GM12878 (cell line): ENCODE measurements at regions of chr2 and their contacts with region 1.

Region 1: GRCh38 chr2:85707304-85707703 is 13.1 kb downstream of the GNLY start:
- DNase-seq: peak; percentile 75
- ATAC-seq: peak; percentile 79
- H3K4me3 ChIP-seq: no peak overlapping the region
- H3K27ac ChIP-seq: no peak overlapping the region
- H3K4me1 ChIP-seq: peaks cover 21% of the 10 kb centered on the region
- H3K27me3 ChIP-seq: no peaks in the 10 kb centered on the region
- CTCF ChIP-seq: peak; percentile 74 to 83 (median 82)
- EP300 ChIP-seq: 0 out of 4 replicates have a peak, but pooled peaks of 1 of the 2 experiments have one; percentile 34
- POLR2A ChIP-seq: no peak
- RAD21 ChIP-seq: peak; percentile 77

Region 2: DNA sequence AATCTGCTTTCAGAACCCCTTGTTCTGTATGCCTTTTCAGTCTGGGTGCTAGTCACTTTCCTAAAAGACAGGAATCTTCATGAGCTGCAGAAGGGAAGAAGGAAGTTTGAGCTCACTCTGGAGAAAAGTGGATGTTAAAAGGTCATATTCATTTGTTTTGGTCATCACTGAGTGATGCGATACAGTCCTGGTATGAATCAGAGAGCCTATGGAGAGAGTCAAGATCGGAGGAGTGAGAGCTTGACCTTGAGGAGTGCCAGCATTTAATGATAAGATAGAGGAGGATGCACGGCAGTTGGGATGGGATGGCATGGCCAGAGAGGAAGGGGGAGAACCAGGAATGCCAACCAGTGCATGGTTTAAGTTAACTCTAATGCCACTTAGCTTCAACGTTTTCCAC is 71.7 kb before region 1 on chr2:
- CTCF ChIA-PET with region 1: interaction called, 162 read pairs
- POLR2A ChIA-PET with region 1: interaction called, 5 read pairs
- RAD21 ChIA-PET with region 1: interaction called, 42 read pairs
- SMC1A ChIA-PET with region 1: interaction called, 71 read pairs
- in situ Hi-C with region 1: loop called (anchors 5 kb)
- intact Hi-C with region 1: loop called (anchors 2 kb)
- DNase-seq: no peak
- ATAC-seq: no peak
- H3K4me3 ChIP-seq: no peak overlapping the region
- H3K27ac ChIP-seq: no peak overlapping the region
- H3K4me1 ChIP-seq: no peaks in the 10 kb centered on the region
- H3K27me3 ChIP-seq: no peaks in the 10 kb centered on the region
- CTCF ChIP-seq: no peak
- EP300 ChIP-seq: no peak
- POLR2A ChIP-seq: no peak
- RAD21 ChIP-seq: no peak

Region 3: DNA sequence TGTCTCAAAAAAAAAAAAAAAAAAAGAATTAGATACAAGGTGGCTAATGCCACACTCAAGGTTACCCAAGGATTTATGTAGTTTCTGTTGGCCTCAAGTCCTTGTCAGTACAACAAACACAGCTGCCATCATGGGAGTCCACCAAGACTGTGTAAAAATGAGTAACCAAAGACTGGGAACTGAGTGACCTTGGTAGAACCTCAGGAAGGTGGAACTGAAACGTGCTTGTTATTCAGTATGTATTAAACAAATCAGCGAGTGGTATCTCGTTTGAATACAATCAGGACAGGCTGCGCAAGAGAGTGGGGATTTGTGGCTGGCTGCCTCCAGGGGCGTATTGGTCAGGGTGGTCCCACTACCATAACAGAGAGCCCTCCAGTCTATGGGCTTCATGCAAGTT is 37.8 kb before region 1 on chr2:
- CTCF ChIA-PET with region 1: interaction called, 23 read pairs
- POLR2A ChIA-PET with region 1: interaction called, 8 read pairs
- RAD21 ChIA-PET with region 1: interaction called, 6 read pairs
- SMC1A ChIA-PET with region 1: interaction called, 6 read pairs
- in situ Hi-C with region 1: no loop called
- intact Hi-C with region 1: no loop called
- DNase-seq: peak; percentile 55
- ATAC-seq: peak; percentile 90
- H3K4me3 ChIP-seq: no peak overlapping the region
- H3K27ac ChIP-seq: no peak overlapping the region
- H3K4me1 ChIP-seq: peaks cover 3% of the 10 kb centered on the region; the same call in 1 of the 2 replicates
- H3K27me3 ChIP-seq: no peaks in the 10 kb centered on the region
- CTCF ChIP-seq: no peak
- EP300 ChIP-seq: no peak
- POLR2A ChIP-seq: no peak
- RAD21 ChIP-seq: no peak

Region 4: GRCh38 chr2:85694052-85695025 is 13.0 kb before region 1 on chr2 and contains the start of gene GNLY:
- CTCF ChIA-PET with region 1: interaction called, 21 read pairs
- POLR2A ChIA-PET with region 1: no interaction called
- RAD21 ChIA-PET with region 1: interaction called, 4 read pairs
- SMC1A ChIA-PET with region 1: interaction called, 22 read pairs
- in situ Hi-C with region 1: no loop called
- intact Hi-C with region 1: no loop called
- DNase-seq: no peak
- ATAC-seq: peak; percentile 27; the same call in 2 of the 3 replicates
- H3K4me3 ChIP-seq: no peak within 1 kb of the TSS
- H3K27ac ChIP-seq: no peak within 1 kb of the TSS
- H3K4me1 ChIP-seq: no peaks in the 10 kb centered on the region
- H3K27me3 ChIP-seq: no peaks in the 10 kb centered on the region
- CTCF ChIP-seq: no peak
- EP300 ChIP-seq: no peak
- POLR2A ChIP-seq: no peak
- RAD21 ChIP-seq: no peak
- polyA plus RNA-seq, gene GNLY: not detected

Region 5: GRCh38 chr2:85813982-85814801 is 106.9 kb after region 1 on chr2:
- CTCF ChIA-PET with region 1: interaction called, 13 read pairs
- POLR2A ChIA-PET with region 1: interaction called, 4 read pairs
- RAD21 ChIA-PET with region 1: interaction called, 5 read pairs
- SMC1A ChIA-PET with region 1: interaction called, 12 read pairs
- in situ Hi-C with region 1: no loop called
- intact Hi-C with region 1: no loop called
- DNase-seq: peak; percentile 30
- ATAC-seq: peak; percentile 99
- H3K4me3 ChIP-seq: no peak overlapping the region
- H3K27ac ChIP-seq: no peak overlapping the region
- H3K4me1 ChIP-seq: no peaks in the 10 kb centered on the region
- H3K27me3 ChIP-seq: no peaks in the 10 kb centered on the region
- CTCF ChIP-seq: peak; percentile 94 to 98 (median 95); a peak in 5 of 6 replicates
- EP300 ChIP-seq: no peak
- POLR2A ChIP-seq: no peak
- RAD21 ChIP-seq: peak; percentile 94